ENCODE measurements at regions of chr4 and their contacts with region 1.

Region 1: DNA sequence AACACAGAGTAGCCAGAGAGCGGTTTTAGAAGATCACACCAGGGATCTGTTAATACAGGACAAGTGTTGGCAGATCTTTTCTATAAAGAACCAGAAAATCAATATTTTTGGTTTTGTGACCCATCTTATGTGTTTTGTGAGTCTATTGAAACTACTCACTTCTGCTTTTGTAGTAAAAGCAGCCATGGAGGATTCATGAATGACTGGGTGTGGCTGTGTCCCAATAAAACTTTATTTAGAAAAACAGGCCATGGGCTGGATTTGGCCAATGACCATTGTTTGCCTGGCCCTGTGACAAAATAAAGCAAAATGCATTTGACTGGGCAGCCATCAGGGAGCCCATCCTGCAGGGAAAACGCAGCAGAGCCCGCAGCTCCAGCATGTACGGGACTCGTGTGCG is 99.9 kb upstream of the ADRA2C start:
- DNase-seq: no peak

Region 2: DNA sequence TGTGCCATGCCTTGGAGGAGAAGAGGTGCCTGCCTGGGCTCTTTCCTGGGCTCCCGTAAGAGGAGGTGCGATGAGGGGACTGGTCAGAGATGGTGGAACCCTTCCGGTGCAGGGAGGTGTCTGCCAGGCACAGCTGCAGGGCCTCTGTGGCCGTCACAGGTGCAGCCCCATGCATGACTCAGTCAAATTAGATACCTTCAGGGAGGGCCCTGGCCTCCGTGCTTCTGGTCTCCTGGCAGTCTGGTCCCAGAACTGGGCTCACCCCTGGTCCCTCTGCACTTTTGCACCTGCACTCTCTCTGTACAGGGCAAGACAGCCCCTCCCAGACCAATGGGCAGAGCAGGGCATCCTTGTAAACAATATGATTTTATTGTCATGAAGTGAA is 84.2 kb before region 1 on chr4:
- intact Hi-C with region 1: no loop called
- DNase-seq: peak; percentile 43

Region 3: GRCh38 chr4:3607690-3608552 is 58.3 kb before region 1 on chr4:
- intact Hi-C with region 1: no loop called
- DNase-seq: no peak

Region 4: GRCh38 chr4:3703677-3704521 is 37.6 kb after region 1 on chr4:
- intact Hi-C with region 1: loop called in 1 of 2 experiments (anchors 5 kb)
- DNase-seq: peak; percentile 61

Region 5: GRCh38 chr4:5050520-5051277 is 1384.4 kb after region 1 on chr4:
- intact Hi-C with region 1: no loop called
- DNase-seq: peak; percentile 90